Naive thymus-derived CD8-positive, alpha-beta T cell (primary cell): ENCODE measurements at regions of chr1 and their contacts with region 1.

Region 1: DNA sequence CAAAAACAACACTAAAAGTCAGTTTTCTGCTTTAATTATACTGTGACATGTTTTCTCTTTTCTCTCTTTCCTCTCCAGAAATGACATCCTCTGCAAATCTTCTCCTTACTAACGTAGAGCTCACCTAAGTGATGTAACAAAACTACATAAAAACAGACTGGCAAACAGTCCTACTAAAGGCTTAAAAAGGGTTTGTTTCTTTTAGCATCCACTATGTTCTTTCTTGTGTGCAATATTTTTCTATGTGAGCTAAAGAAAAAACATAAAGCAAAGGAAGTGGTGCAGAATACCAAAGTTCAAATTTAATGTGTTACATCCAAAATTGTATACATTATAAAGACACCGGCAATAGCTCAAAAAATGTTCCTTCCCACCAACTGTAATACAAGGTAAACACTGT is 14.5 kb downstream of the USP24 start:
- DNase-seq: peak in 2 of 10 donors; percentile 36 to 39
- ATAC-seq: peak in 1 of 2 donors; percentile 78
- H3K4me3 Mint-ChIP-seq: peak overlapping the region in 8 of 10 donors; percentile 11 to 65 (median 30)
- H3K27ac Mint-ChIP-seq: peak overlapping the region; percentile 4 to 86 (median 72)
- H3K4me1 Mint-ChIP-seq: peaks cover 37 to 85% (median 81%) of the 10 kb centered on the region in 4 donors
- H3K27me3 Mint-ChIP-seq: no peaks in the 10 kb centered on the region

Region 2: GRCh38 chr1:55179177-55179835 is 21.4 kb before region 1 on chr1:
- POLR2A ChIA-PET with region 1: no interaction called
- DNase-seq: no peak
- ATAC-seq: no peak
- H3K4me3 Mint-ChIP-seq: no peak overlapping the region
- H3K27ac Mint-ChIP-seq: peak overlapping the region in 7 of 10 donors; percentile 3 to 57 (median 35)
- H3K4me1 Mint-ChIP-seq: peaks cover 28 to 49% (median 46%) of the 10 kb centered on the region in 4 donors
- H3K27me3 Mint-ChIP-seq: no peaks in the 10 kb centered on the region

Region 3: DNA sequence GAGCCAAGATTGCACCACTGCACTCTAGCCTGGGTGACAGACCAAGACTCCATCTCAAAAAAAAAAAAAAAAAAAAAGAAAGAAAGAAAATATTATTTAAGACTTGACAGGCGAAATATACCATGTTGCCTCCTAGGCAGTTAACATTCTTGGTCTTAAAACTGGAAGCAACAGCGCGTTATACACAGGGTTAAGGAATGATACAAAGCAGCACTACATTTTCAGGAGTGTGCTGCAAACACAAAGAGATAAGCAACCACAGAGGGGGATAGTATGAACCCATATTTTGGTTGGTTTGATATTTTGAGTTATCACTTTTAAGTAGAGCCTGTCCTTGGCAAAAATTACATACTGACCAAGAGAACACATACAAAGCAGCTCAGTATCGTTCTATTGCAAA is 10.6 kb before region 1 on chr1:
- POLR2A ChIA-PET with region 1: no interaction called
- DNase-seq: no peak
- ATAC-seq: no peak
- H3K4me3 Mint-ChIP-seq: no peak overlapping the region
- H3K27ac Mint-ChIP-seq: no peak overlapping the region
- H3K4me1 Mint-ChIP-seq: peaks cover 28 to 81% (median 69%) of the 10 kb centered on the region in 4 donors
- H3K27me3 Mint-ChIP-seq: no peaks in the 10 kb centered on the region

Region 4: GRCh38 chr1:55215256-55216021 is 14.8 kb after region 1 on chr1 and contains the start of gene USP24:
- POLR2A ChIA-PET with region 1: interaction called, 16 read pairs
- DNase-seq: peak; percentile 74 to 91 (median 83)
- ATAC-seq: peak; percentile 81 to 83
- H3K4me3 Mint-ChIP-seq: peak within 1 kb of the TSS; percentile 92 to 99 (median 96)
- H3K27ac Mint-ChIP-seq: peak within 1 kb of the TSS; percentile 95 to 100 (median 98)
- H3K4me1 Mint-ChIP-seq: peaks cover 43 to 73% (median 67%) of the 10 kb centered on the region in 4 donors
- H3K27me3 Mint-ChIP-seq: no peaks in the 10 kb centered on the region
- polyA plus RNA-seq, gene USP24: 5.5 to 8.4 (median 6.0) TPM